A549 (cell line): ENCODE measurements at regions of chr3 and their contacts with region 1.

Region 1: GRCh38 chr3:11271986-11272904 is at the start of gene ATG7:
- DNase-seq: peak; percentile 95 to 97
- ATAC-seq: peak; percentile 96 to 97
- H3K4me3 ChIP-seq: peak within 1 kb of the TSS; percentile 73
- H3K27ac ChIP-seq: peak within 1 kb of the TSS; percentile 83 to 91
- H3K4me1 ChIP-seq: peaks cover 12% of the 10 kb centered on the region; the same call in 2 of the 3 replicates
- CTCF ChIP-seq: no peak
- EP300 ChIP-seq: no peak
- POLR2A ChIP-seq: peak; percentile 94
- RAD21 ChIP-seq: no peak
- polyA plus RNA-seq, gene ATG7: 30.2 and 41.2 TPM in 2 replicates

Region 2: DNA sequence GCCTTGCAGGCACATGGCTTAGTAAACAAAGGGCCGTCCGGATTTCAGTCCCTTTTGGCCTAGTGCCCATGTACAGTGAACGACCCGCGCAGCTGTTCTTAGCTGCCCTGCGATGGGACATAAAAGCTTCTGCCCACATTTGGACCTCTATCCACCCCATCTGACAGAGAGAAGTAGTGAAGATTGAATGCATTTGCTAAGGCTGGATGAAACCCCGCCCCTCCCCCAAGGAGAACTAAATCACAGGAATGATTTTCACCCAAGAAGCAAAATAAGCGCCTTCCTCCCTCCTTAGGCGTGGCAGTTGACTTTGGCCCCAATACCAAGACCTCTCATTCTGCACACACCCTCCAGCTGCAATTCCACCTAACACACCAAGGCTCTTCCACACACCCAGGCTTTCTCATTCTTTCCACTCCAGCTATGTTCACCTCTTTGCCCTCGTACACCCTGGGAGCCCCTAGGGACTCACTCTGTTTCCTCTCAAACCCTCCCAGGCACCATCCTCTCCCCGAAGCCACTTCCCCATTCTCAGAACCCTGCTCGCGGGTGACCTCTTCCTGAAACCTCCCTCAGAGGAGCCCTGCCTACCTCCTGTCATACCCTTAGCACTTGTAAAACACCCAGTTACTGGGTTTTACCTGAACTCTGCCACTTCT is 132.1 kb before region 1 on chr3:
- CTCF ChIA-PET with region 1: no interaction called
- POLR2A ChIA-PET with region 1: no interaction called
- DNase-seq: peak in 1 of 2 experiments; percentile 62
- ATAC-seq: no peak
- H3K4me3 ChIP-seq: no peak overlapping the region
- H3K27ac ChIP-seq: peak overlapping the region; percentile 16 to 66; a peak in 5 of 6 replicates
- H3K4me1 ChIP-seq: peaks cover 29% of the 10 kb centered on the region
- CTCF ChIP-seq: no peak
- EP300 ChIP-seq: no peak
- POLR2A ChIP-seq: no peak
- RAD21 ChIP-seq: no peak

Region 3: GRCh38 chr3:11204697-11205348 is 67.4 kb before region 1 on chr3:
- CTCF ChIA-PET with region 1: no interaction called
- POLR2A ChIA-PET with region 1: no interaction called
- DNase-seq: no peak
- ATAC-seq: no peak
- H3K4me3 ChIP-seq: no peak overlapping the region
- H3K27ac ChIP-seq: no peak overlapping the region
- H3K4me1 ChIP-seq: peaks cover 27% of the 10 kb centered on the region
- CTCF ChIP-seq: no peak
- EP300 ChIP-seq: no peak
- POLR2A ChIP-seq: no peak
- RAD21 ChIP-seq: no peak

Region 4: DNA sequence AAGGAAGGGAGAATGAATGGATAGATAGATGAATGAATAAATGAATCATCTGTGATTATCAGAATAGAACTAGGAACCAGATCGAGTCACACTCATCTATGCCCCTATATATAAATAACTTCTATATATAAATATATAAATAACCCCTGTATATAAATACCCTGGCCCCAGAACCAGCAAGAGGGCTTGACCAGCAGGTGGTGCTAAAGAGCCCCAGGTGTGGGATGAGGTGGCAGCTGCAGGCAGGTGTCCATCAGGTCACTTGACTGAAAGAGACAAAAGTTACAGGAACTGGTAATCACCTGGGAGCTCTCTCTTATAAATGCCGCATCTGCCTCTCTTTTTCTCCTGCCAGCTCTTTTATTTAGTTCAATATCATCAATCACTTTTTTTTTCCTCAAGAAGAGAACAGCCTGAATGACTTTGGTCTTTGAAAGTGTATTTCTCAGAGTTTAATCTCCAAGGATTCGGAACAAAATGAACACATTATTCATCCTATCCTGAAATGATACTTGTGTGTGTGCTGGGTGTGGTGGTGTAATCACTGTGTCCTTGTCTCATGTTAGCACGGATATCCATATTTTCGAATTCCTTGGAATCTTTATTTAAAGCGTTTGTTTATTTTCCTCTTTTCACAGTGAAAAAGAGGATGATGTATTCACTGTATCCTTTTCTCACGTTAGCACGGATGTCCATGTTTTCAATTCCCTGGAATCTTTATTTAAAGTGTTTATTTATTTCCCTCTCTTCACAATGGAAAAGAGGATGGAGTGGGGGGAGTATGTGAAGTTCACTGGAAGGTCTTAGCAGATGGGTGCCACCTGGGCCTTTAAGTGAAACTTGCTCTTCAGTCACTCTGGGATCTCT is 35.4 kb before region 1 on chr3:
- CTCF ChIA-PET with region 1: interaction called, 15 read pairs
- POLR2A ChIA-PET with region 1: interaction called, 3 read pairs
- DNase-seq: peak; percentile 60 to 63
- ATAC-seq: peak; percentile 80 to 88; a peak in 5 of 6 replicates
- H3K4me3 ChIP-seq: no peak overlapping the region
- H3K27ac ChIP-seq: no peak overlapping the region
- H3K4me1 ChIP-seq: no peaks in the 10 kb centered on the region
- CTCF ChIP-seq: peak; percentile 91
- EP300 ChIP-seq: no peak
- POLR2A ChIP-seq: no peak
- RAD21 ChIP-seq: peak; percentile 71 to 74

Region 5: DNA sequence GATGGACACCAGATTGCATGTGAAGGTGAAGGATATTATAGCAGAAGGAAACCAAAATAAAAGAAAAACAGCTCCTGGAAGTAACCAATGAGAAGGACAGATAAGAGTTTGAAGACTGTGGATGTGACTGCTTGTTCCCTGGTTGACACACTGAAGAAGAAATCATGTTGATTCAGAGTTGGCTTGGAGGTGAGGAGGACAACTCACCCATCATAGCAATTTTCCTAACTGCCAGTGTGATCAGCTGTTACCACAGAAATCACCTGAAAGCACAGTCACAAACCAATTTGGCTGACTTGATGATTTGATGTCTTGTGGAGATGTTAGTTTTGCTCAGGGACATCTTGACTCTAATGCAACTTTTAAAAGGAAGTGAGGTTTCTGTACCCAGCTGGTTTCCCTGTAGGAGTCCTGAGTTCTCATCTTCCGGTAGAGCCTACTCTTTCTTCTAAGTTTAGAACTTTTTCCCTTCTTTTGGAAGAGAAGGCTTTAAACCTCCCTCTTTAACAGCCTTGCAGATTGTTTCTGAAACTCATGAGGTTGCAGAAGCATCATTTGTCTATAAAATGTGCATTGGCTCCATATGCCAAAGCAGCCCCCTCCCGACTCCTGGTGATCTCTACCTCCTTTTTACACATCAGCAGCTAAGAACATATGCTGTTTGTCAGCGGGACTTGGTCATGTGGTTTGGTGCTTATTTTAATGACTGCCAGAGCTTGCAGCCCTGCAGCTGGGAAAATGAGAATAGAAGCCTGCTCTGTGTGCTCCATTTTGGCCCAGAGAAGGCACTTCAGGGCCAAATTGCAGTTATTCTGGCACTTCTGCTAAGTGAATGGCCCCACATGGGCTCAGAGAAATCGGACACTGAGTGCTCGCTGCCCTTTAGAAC is 10.2 kb after region 1 on chr3:
- CTCF ChIA-PET with region 1: interaction called, 3 read pairs
- POLR2A ChIA-PET with region 1: interaction called, 29 read pairs
- DNase-seq: no peak
- ATAC-seq: no peak
- H3K4me3 ChIP-seq: no peak overlapping the region
- H3K27ac ChIP-seq: no peak overlapping the region
- H3K4me1 ChIP-seq: peaks cover 14% of the 10 kb centered on the region
- CTCF ChIP-seq: no peak
- EP300 ChIP-seq: no peak
- POLR2A ChIP-seq: no peak
- RAD21 ChIP-seq: no peak

Region 6: DNA sequence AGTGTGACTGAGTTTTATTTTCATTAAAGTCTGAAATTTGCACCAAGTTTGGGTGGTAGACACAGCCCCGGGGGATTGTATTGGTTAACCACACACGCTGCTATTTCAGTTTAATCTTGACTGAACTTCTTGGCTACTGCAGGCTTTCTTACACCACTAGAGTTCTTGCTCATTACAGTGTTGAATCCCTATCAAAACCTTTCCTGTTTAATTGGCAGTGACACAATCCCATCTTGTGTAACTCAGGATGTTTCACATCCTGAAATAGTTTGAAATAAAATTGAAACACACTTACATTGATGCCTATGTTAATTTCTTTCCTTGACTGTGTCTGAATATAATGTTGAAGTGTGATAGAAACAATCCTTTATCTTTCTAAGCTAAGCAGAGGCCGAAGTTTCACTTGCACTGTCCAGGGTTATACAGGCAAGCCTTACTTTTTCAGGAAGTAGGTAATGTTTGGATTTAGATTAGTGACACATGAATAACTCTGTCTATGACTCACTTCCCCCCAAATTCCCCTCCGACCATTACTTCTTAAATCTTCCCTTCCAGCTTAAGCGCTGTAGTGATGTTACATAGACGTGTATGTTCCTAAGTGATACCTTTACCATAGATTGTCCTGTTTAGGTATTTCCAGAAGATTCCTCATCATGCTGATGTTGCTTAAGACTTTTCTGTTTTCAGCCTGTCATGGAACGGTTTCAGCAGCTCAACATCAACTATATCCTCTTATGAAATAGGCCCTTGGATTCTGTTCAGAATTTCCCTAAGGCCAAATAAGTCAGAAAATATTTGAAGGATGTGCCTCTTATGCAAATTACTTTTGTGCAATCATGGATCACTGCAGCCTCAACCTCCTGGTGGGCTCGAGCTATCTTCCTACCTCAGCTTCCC is 16.8 kb after region 1 on chr3:
- CTCF ChIA-PET with region 1: interaction called, 6 read pairs
- POLR2A ChIA-PET with region 1: interaction called, 29 read pairs
- DNase-seq: peak; percentile 64 to 79
- ATAC-seq: peak; percentile 91 to 94
- H3K4me3 ChIP-seq: peak overlapping the region; percentile 6; the same call in 1 of the 3 replicates
- H3K27ac ChIP-seq: peak overlapping the region; percentile 73 to 85
- H3K4me1 ChIP-seq: peaks cover 46% of the 10 kb centered on the region
- CTCF ChIP-seq: no peak
- EP300 ChIP-seq: peak in 1 of 2 experiments; percentile 50; a peak in 2 of 5 replicates
- POLR2A ChIP-seq: no peak
- RAD21 ChIP-seq: no peak